Gastrocnemius medialis (tissue), 4 donors: ENCODE measurements at regions of chr2 and their contacts with region 1.

Region 1: DNA sequence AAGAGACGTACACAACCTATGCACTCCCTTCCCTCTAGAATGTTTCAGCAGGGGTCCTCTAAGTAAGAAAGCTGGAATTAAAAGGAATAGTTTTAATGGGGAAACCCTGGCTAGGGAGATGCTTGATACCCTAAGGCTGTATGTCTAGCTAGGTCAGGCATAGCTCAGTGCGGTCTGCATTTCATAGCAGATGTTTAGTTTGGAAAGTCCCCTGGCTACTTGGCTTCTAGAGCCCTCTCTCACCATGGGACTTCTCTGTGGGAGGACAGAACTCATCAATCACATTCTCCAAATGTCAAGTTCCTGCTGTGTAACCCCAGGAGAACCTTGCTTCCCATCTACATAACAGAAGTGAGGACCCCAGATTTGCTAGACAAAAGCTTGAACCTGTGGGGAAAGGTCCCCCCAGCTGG is 24.1 kb upstream of the ANXA4 start:
- DNase-seq: no peak
- ATAC-seq: no peak
- H3K4me3 ChIP-seq: no peak overlapping the region
- H3K27ac ChIP-seq: no peak overlapping the region
- H3K4me1 ChIP-seq: no peaks in the 10 kb centered on the region
- H3K27me3 ChIP-seq: no peaks in the 10 kb centered on the region
- CTCF ChIP-seq: no peak
- POLR2A ChIP-seq: no peak

Region 2: DNA sequence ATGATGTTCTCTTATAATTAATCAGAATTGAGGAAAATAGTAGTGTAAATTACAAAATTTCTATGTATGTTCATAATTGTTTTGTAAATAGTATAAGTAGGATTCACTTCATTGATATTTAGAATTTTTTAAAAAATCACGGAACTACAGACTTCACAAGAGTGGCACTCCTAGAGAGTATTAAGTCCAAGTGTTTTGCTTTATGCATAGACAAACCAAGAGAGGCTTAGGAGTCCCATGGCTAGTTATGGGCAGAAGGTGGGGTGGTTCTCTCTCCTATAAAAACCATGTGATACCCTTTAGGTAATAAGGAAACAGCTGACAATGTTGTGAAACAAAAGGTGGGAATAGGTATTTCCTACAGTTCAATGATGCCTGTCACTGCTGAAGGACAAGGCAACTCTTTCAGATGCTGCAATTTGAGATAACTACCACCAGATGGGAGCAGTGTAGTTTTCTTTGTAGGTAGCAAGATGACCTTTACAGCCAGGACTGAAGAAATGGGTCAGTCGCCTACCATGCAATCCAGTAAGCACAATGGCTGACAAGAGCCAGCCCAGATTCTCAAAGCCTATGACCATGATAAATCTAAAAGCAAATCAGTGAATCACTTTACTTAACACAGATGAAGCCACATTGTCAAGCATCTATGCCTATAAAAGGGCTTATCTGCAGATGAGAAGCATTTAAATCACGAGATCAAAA is 158.3 kb before region 1 on chr2:
- in situ Hi-C with region 1: loop called (anchors 5 to 10 kb)
- intact Hi-C with region 1: loop called (anchors 1 kb)
- DNase-seq: peak in 1 of 2 donors; percentile 53
- ATAC-seq: peak; percentile 95 to 97
- H3K4me3 ChIP-seq: no peak overlapping the region
- H3K27ac ChIP-seq: peak overlapping the region in 3 of 4 donors; percentile 10 to 33 (median 11)
- H3K4me1 ChIP-seq: peaks cover 20 to 54% of the 10 kb centered on the region in 2 donors
- H3K27me3 ChIP-seq: no peaks in the 10 kb centered on the region
- CTCF ChIP-seq: peak; percentile 75 to 85 (median 78)
- POLR2A ChIP-seq: no peak

Region 3: GRCh38 chr2:69565431-69565839 is 152.4 kb before region 1 on chr2:
- in situ Hi-C with region 1: loop called (anchors 5 to 10 kb)
- intact Hi-C with region 1: no loop called
- DNase-seq: peak in 1 of 2 donors; percentile 22
- ATAC-seq: peak in 1 of 2 donors; percentile 35
- H3K4me3 ChIP-seq: no peak overlapping the region
- H3K27ac ChIP-seq: no peak overlapping the region
- H3K4me1 ChIP-seq: peaks cover 27 to 80% of the 10 kb centered on the region in 2 donors
- H3K27me3 ChIP-seq: no peaks in the 10 kb centered on the region
- CTCF ChIP-seq: peak; percentile 28 to 67 (median 45)
- POLR2A ChIP-seq: no peak